ENCODE measurements at regions of chr22 and their contacts with region 1.

Region 1: DNA sequence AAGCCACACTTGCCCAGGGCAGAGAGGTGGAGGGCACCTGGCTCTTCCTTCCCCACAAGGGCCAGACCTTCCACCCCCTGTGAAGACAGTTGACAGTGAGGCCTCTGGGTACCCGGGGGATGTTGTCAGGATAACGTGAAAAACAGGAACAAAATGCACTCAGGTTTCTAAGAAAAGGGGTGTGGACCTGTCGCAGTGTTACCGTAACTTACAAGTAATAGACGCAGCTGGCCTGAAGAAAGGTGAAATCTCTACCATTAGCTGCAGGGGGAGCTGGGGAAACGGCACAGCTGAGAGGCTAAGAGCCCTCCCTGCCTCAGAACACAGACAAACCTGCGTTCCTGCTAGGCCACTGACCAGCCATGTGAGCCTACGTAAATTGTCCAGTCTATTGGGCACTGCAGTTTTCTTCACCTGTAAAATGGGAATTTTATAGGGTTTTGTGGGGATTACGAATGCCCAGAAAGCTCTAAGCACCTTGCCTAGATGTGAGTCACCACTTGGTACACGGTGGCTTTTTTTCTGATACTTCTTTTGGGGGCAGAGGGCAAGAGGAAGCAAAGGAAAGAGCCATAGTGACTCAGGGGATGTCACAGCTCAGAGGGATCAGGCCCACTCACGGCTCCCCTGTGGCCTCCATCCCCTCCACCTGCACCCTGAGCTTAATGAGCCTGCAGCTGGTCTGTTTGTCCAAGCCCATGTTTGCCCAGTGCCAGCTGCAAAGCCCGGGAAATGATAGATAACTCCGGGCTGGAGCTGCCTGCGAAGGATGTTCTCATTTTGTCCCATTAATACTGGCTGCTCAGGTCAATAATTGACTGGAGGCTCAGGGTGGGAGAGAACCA is 18.4 kb upstream of the CABP7 start:
- DNase-seq: peak; percentile 64
- H3K4me3 ChIP-seq: no peak overlapping the region
- H3K27ac ChIP-seq: peak overlapping the region in 1 of 2 experiments; percentile 69; a peak in 2 of 4 replicates
- H3K4me1 ChIP-seq: peaks cover 12 to 86% of the 10 kb centered on the region in 2 experiments; a peak in 2 of 4 replicates
- H3K27me3 ChIP-seq: no peaks in the 10 kb centered on the region
- CTCF ChIP-seq: peak; percentile 12; the same call in 1 of the 2 replicates
- EP300 ChIP-seq: peak in 1 of 2 experiments; percentile 25; a peak in 1 of 4 replicates
- RAD21 ChIP-seq: 0 out of 2 replicates have a peak, but pooled peaks have one; percentile 10

Region 2: DNA sequence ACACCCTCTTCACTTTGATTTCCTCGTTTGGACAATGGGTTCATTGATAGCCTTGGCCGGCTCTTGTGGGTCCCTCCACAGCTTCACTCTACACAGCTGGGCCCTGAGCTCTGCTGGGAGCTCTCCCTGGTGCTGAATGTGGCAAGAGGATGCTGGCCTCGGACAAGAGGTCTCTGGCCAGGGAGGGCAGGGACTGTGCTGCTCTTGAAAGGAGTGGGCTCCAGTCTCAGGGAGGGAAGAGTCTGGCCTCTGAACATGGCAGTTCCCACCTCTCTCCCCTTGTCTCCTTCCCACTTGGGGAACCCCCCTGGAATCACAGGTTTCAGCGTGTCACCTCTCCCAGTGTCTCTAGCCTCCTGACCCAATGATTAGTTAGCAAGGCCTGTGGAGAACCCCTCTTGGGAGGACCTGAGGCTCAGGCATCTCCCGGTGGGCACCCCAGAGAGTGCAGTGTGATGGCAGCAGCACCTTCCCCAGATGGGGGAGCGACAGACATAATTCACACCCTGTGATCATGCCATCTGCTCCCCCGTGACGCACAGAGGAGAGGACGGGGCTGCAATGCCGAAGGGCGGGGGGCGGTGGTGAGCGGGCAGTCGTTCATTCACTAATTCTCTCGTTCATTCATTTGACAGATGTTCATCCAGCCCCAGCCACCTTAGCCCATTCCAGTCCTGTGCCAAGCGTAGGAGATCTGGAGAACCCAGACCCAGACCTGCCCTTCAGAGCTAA is 15.6 kb after region 1 on chr22:
- CTCF ChIA-PET with region 1: interaction called, 12 read pairs
- POLR2A ChIA-PET with region 1: interaction called, 13 read pairs
- DNase-seq: no peak
- H3K4me3 ChIP-seq: no peak overlapping the region
- H3K27ac ChIP-seq: no peak overlapping the region
- H3K4me1 ChIP-seq: peaks cover 0 to 62% of the 10 kb centered on the region in 2 experiments; a peak in 1 of 4 replicates
- H3K27me3 ChIP-seq: peaks cover 18% of the 10 kb centered on the region; the same call in 1 of the 2 replicates
- CTCF ChIP-seq: no peak
- EP300 ChIP-seq: no peak
- RAD21 ChIP-seq: no peak

Region 3: GRCh38 chr22:29820961-29821789 is 119.8 kb after region 1 on chr22:
- CTCF ChIA-PET with region 1: no interaction called
- POLR2A ChIA-PET with region 1: no interaction called
- DNase-seq: peak; percentile 68
- H3K4me3 ChIP-seq: no peak overlapping the region
- H3K27ac ChIP-seq: peak overlapping the region; percentile 8 to 9; a peak in 2 of 4 replicates
- H3K4me1 ChIP-seq: peaks cover 6 to 11% of the 10 kb centered on the region in 2 experiments; a peak in 2 of 4 replicates
- H3K27me3 ChIP-seq: no peaks in the 10 kb centered on the region
- CTCF ChIP-seq: no peak
- EP300 ChIP-seq: no peak
- RAD21 ChIP-seq: no peak; the same call in 1 of the 2 replicates

Measured in SK-N-SH (cell line).